Vagina (tissue), 2 donors: ENCODE measurements at regions of chr9 and their contacts with region 1.

Region 1: GRCh38 chr9:72371151-72371550 is 6.1 kb upstream of the ZFAND5 start:
- DNase-seq: no peak
- H3K4me3 ChIP-seq: no peak overlapping the region
- H3K27ac ChIP-seq: no peak overlapping the region
- H3K4me1 ChIP-seq: peaks cover 9% of the 10 kb centered on the region
- H3K27me3 ChIP-seq: no peaks in the 10 kb centered on the region
- CTCF ChIP-seq: no peak
- POLR2A ChIP-seq: no peak

Region 2: DNA sequence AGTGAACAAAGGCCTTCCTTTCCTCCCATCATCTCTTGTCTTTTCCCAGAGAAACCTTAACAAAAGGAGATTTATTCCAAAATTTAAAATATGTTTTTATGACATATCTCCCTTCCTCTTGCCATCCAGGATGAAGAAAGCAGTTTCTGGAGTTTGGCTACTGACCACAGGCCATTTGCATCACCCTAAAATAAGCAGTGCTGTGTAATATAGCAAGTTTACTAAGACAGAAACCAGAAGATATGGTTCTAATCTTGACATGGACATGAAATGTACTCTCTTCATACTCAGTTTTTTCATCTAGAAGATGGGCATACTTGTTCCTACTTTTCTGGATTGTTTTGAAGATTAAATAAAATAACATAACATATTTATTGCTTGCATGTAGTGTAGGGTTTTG is 44.0 kb after region 1 on chr9:
- intact Hi-C with region 1: loop called (anchors 1 kb)
- DNase-seq: no peak
- H3K4me3 ChIP-seq: no peak overlapping the region
- H3K27ac ChIP-seq: no peak overlapping the region
- H3K4me1 ChIP-seq: no peaks in the 10 kb centered on the region
- H3K27me3 ChIP-seq: no peaks in the 10 kb centered on the region
- CTCF ChIP-seq: no peak
- POLR2A ChIP-seq: no peak

Region 3: GRCh38 chr9:72473474-72474261 is 102.5 kb after region 1 on chr9:
- intact Hi-C with region 1: no loop called
- DNase-seq: no peak
- H3K4me3 ChIP-seq: no peak overlapping the region
- H3K27ac ChIP-seq: no peak overlapping the region
- H3K4me1 ChIP-seq: peaks cover 21% of the 10 kb centered on the region
- H3K27me3 ChIP-seq: no peaks in the 10 kb centered on the region
- CTCF ChIP-seq: no peak
- POLR2A ChIP-seq: no peak